Natural killer cell (primary cell): ENCODE measurements at regions of chr3 and their contacts with region 1.

Region 1: GRCh38 chr3:47035634-47036033 is 56.2 kb downstream of the NBEAL2 start:
- DNase-seq: no peak
- ATAC-seq: no peak
- H3K4me3 ChIP-seq: no peak overlapping the region
- H3K4me3 Mint-ChIP-seq: no peak overlapping the region
- H3K27ac ChIP-seq: no peak overlapping the region
- H3K27ac Mint-ChIP-seq: peak overlapping the region in 1 of 2 donors; percentile 31
- H3K4me1 ChIP-seq: peaks cover 11% of the 10 kb centered on the region
- H3K4me1 Mint-ChIP-seq: peaks cover 23 to 36% of the 10 kb centered on the region in 2 donors
- H3K27me3 ChIP-seq: no peaks in the 10 kb centered on the region
- H3K27me3 Mint-ChIP-seq: no peaks in the 10 kb centered on the region
- CTCF ChIP-seq: no peak

Region 2: GRCh38 chr3:46500656-46501635 is 534.7 kb before region 1 on chr3:
- intact Hi-C with region 1: no loop called
- DNase-seq: no peak
- ATAC-seq: no peak
- H3K4me3 ChIP-seq: no peak overlapping the region
- H3K4me3 Mint-ChIP-seq: no peak overlapping the region
- H3K27ac ChIP-seq: no peak overlapping the region
- H3K27ac Mint-ChIP-seq: no peak overlapping the region
- H3K4me1 ChIP-seq: no peaks in the 10 kb centered on the region
- H3K4me1 Mint-ChIP-seq: peaks cover 0 to 10% of the 10 kb centered on the region in 2 donors
- H3K27me3 ChIP-seq: no peaks in the 10 kb centered on the region
- H3K27me3 Mint-ChIP-seq: peaks cover 0 to 8% of the 10 kb centered on the region in 2 donors
- CTCF ChIP-seq: no peak

Region 3: GRCh38 chr3:46947981-46948791 is 87.4 kb before region 1 on chr3:
- intact Hi-C with region 1: loop called (anchors 5 kb)
- DNase-seq: peak; percentile 66 to 87
- ATAC-seq: peak; percentile 58 to 76 (median 66)
- H3K4me3 ChIP-seq: peak overlapping the region; percentile 17
- H3K4me3 Mint-ChIP-seq: peak overlapping the region; percentile 92
- H3K27ac ChIP-seq: peak overlapping the region; percentile 98
- H3K27ac Mint-ChIP-seq: peak overlapping the region; percentile 96 to 99
- H3K4me1 ChIP-seq: peaks cover 98% of the 10 kb centered on the region
- H3K4me1 Mint-ChIP-seq: peaks cover 90 to 92% of the 10 kb centered on the region in 2 donors
- H3K27me3 ChIP-seq: no peaks in the 10 kb centered on the region
- H3K27me3 Mint-ChIP-seq: no peaks in the 10 kb centered on the region
- CTCF ChIP-seq: no peak

Region 4: DNA sequence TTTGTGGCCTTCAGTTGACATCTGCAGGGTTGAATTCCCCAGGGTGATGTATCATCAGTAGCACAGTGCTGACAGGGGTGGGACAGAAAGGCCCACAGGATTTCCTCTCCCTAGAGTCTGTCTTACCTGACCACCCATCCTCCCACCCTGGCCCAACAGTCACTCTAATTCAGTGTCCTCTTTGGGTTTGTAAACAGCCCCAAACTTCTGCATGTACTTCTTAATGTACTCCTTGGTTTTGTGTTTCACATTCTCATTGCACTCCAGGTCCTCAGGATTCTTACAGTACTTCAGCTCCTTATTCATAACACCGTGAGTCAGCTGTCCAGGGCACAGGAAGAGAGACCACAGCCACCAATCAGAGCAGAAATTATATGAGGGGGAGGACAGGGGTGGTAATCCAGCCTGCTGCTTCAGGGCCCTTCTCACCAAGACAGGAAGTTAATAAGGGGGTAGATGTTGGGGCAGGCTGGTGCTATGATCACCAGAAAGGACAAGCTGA is 18.6 kb before region 1 on chr3:
- intact Hi-C with region 1: loop called (anchors 1 kb)
- DNase-seq: peak; percentile 45 to 54
- ATAC-seq: peak; percentile 78 to 90 (median 85)
- H3K4me3 ChIP-seq: no peak overlapping the region
- H3K4me3 Mint-ChIP-seq: peak overlapping the region; percentile 55
- H3K27ac ChIP-seq: peak overlapping the region; percentile 60
- H3K27ac Mint-ChIP-seq: peak overlapping the region; percentile 87 to 90
- H3K4me1 ChIP-seq: peaks cover 24% of the 10 kb centered on the region
- H3K4me1 Mint-ChIP-seq: peaks cover 44 to 45% of the 10 kb centered on the region in 2 donors
- H3K27me3 ChIP-seq: no peaks in the 10 kb centered on the region
- H3K27me3 Mint-ChIP-seq: no peaks in the 10 kb centered on the region
- CTCF ChIP-seq: no peak

Region 5: GRCh38 chr3:47781685-47782445 is 746.2 kb after region 1 on chr3 and contains the start of gene SMARCC1:
- intact Hi-C with region 1: loop called (anchors 5 kb)
- DNase-seq: peak; percentile 95 to 99
- ATAC-seq: peak; percentile 82 to 96 (median 87)
- H3K4me3 ChIP-seq: peak within 1 kb of the TSS; percentile 82
- H3K4me3 Mint-ChIP-seq: peak within 1 kb of the TSS; percentile 90
- H3K27ac ChIP-seq: peak within 1 kb of the TSS; percentile 94
- H3K27ac Mint-ChIP-seq: peak within 1 kb of the TSS; percentile 96 to 99
- H3K4me1 ChIP-seq: peaks cover 29% of the 10 kb centered on the region
- H3K4me1 Mint-ChIP-seq: peaks cover 23% of the 10 kb centered on the region in 2 donors
- H3K27me3 ChIP-seq: no peaks in the 10 kb centered on the region
- H3K27me3 Mint-ChIP-seq: peaks cover 0 to 3% of the 10 kb centered on the region in 2 donors
- CTCF ChIP-seq: no peak
- total RNA-seq, gene SMARCC1: 96.1 to 108 (median 102) TPM